Aorta (tissue), 5 donors: ENCODE measurements at regions of chr2 and their contacts with region 1.

Region 1: GRCh38 chr2:47034973-47035609 is 119.5 kb upstream of the MCFD2 start:
- DNase-seq: peak; percentile 79 to 85
- ATAC-seq: no peak
- H3K4me3 ChIP-seq: no peak overlapping the region
- H3K27ac ChIP-seq: peak overlapping the region; percentile 86 to 96
- H3K4me1 ChIP-seq: peaks cover 0 to 5% of the 10 kb centered on the region in 2 donors
- H3K27me3 ChIP-seq: no peaks in the 10 kb centered on the region

Region 2: GRCh38 chr2:47002480-47003381 is 32.4 kb before region 1 on chr2:
- intact Hi-C with region 1: loop called in 1 of 2 experiments (anchors 5 kb)
- DNase-seq: peak in 1 of 2 donors; percentile 69
- ATAC-seq: peak; percentile 37
- H3K4me3 ChIP-seq: no peak overlapping the region
- H3K27ac ChIP-seq: peak overlapping the region in 1 of 2 donors; percentile 4
- H3K4me1 ChIP-seq: peaks cover 0 to 4% of the 10 kb centered on the region in 2 donors
- H3K27me3 ChIP-seq: no peaks in the 10 kb centered on the region